Upper lobe of right lung (tissue), 1 donor: ENCODE measurements at regions of chr3 and their contacts with region 1.

Region 1: DNA sequence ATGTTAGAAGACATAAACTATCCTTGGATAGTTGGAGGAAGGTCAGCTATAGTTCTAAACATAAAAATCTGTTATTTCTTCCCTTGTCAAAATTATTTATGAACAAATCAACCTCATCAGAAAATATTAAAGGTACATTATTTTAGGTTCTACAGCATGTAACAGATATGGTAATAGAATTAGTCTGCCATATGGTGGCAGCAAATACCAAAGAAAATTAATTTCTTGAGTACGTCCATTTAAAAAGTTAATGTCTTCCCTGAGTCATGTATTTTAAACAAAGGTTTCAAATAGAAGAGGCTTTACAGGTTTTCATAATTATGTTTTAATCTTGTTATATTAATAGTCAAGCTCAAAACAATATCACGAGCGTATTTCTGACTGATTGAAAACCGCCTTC is 17.9 kb upstream of the ANKRD28 start:
- DNase-seq: no peak
- ATAC-seq: peak; percentile 53
- H3K4me3 ChIP-seq: no peak overlapping the region
- H3K27ac ChIP-seq: no peak overlapping the region
- H3K4me1 ChIP-seq: peaks cover 8% of the 10 kb centered on the region
- H3K27me3 ChIP-seq: no peaks in the 10 kb centered on the region
- CTCF ChIP-seq: peak; percentile 53

Region 2: DNA sequence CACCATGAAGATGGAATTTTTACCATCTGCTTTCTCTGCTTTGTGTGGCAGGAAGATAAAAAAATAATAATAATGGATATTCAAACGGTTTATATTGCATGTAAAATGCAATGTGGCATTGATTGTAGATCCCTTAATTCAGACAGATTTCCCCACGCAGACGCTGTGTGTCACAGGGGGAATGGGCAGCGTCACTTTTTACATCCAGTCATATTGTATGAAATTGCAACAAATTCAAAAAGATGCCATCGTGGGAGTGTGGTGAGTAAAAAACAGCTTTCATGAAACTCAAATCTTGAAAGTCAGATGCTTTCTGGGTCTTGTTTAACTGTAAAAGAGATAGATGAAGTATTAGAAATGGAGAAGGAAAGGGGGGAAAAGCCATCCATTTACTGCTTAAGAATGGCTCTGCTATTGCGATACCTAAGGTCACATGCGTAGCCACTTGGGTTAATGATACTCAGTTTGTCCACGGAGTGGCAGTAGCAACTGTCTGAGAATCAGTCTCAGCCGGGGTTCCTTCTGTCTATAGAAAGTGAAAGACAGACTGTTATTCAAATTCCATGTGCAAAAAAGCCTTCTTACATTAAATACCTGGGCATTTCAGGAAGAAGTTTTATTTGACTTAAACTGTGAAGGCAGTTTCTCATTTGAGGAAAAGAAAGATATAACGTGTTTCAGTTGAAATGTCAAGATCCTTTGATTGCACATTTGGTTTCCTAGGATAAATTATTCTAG is 185.7 kb before region 1 on chr3:
- intact Hi-C with region 1: loop called (anchors 10 kb)
- DNase-seq: no peak
- ATAC-seq: peak; percentile 98
- H3K4me3 ChIP-seq: peak overlapping the region; percentile 43
- H3K27ac ChIP-seq: peak overlapping the region; percentile 33
- H3K4me1 ChIP-seq: peaks cover 23% of the 10 kb centered on the region
- H3K27me3 ChIP-seq: no peaks in the 10 kb centered on the region
- CTCF ChIP-seq: peak; percentile 76

Region 3: DNA sequence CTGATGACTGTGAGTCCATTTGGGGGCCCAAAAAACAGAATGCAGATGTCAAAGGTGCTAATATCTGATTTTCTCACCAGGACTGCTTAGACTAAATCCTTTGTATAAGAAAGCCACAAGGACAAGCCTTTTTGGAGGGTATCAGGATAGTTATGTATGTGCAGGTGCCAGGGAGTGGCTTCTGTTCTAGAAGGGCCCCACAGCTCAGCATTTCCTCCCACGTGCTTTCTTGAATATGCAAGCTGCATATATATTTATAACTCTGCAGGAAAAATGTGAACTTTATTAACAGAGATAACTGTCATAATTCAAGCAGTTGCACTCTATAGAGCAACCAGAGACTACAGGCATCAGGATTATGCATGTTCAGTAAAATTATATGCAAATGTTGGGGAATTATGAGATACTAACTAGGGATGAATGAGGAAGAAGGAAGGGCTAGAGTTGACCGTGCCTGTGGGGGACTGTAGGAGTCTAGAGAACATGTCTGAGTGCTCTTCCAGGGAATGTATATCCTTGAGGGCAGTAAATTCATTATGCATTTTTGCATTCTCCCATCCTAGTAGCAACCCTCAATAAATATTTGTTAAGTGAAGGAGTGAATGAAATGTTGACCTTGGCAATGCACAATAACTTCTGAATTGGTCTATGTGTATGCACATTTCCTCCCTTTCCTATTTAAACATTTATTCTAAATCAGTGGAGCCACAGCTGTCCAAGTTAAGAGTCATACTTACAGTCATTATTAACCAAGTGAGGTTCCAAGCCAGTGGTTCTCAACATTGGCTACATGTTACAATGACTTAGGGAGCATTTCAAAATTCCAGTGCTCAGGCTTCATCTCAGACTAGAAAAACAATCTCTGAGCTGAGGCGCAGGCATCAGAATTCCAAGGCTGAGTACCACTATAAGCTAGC is 76.9 kb after region 1 on chr3:
- intact Hi-C with region 1: no loop called
- DNase-seq: no peak
- ATAC-seq: no peak
- H3K4me3 ChIP-seq: no peak overlapping the region
- H3K27ac ChIP-seq: no peak overlapping the region
- H3K4me1 ChIP-seq: no peaks in the 10 kb centered on the region
- H3K27me3 ChIP-seq: no peaks in the 10 kb centered on the region
- CTCF ChIP-seq: no peak

Region 4: GRCh38 chr3:16570113-16570512 is 754.4 kb after region 1 on chr3:
- intact Hi-C with region 1: no loop called
- DNase-seq: no peak
- ATAC-seq: no peak
- H3K4me3 ChIP-seq: no peak overlapping the region
- H3K27ac ChIP-seq: no peak overlapping the region
- H3K4me1 ChIP-seq: no peaks in the 10 kb centered on the region
- H3K27me3 ChIP-seq: no peaks in the 10 kb centered on the region
- CTCF ChIP-seq: no peak